Activated T-helper 1 cell treated with anti-CD3 and anti-CD28 coated beads, Interleukin-12 subunit alpha, Interleukin-12 subunit beta, Interleukin-2, Interleukin-4 antibody, amounts not matched to agents 30 ng/mL and 10 ng/mL and 1 ng/mL, durations not matched to agents 14 hours and 24 hours and 36 hours (primary cell): ENCODE measurements at regions of chr18 and their contacts with region 1.

Region 1: GRCh38 chr18:77000527-77000926 is 132.1 kb downstream of the MBP start:
- DNase-seq: peak; percentile 14
- H3K4me3 Mint-ChIP-seq: no peak overlapping the region
- H3K27ac Mint-ChIP-seq: no peak overlapping the region
- H3K4me1 Mint-ChIP-seq: peaks cover 26% of the 10 kb centered on the region
- H3K27me3 Mint-ChIP-seq: peaks cover 3% of the 10 kb centered on the region

Region 2: DNA sequence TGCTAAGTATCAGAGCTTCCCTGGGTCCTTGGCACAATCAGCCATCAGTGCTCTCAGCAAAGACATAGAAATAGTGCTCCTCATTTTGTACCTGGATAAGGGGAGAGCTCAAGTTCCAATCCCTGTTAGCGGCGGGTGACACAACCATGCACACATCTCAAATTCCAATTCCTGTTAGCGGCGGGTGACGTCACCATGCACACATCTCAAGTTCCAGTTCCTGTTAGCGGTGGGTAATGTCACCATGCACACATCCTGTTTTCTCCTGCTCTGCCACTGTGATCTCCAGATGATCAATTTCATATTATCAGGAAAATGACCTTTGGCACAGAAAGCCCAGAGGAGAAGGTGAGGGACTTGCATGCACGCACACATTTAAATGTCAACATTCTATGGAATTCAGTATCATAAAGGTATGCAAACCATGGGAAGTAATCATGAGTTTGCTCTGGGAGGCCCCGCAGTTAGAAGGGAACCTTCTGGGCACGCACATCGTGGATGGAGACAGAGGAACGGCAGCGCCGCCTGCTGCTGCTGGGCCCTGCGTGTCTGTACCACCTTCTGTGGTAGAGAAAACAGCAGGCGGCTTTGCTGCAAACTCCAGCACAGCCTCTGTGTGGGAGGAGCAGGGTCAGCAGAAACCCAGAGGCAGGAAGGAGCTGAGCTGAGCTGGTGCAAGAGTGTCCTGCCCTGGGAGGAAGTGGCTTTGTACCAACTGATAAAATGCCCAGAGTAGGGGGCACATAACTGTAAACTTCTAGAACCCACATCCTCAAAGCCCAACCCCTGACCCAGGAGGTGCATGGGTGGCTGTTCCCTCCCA is 54.3 kb after region 1 on chr18:
- intact Hi-C with region 1: loop called (anchors 1 kb)
- DNase-seq: peak; percentile 78
- H3K4me3 Mint-ChIP-seq: peak overlapping the region; percentile 72
- H3K27ac Mint-ChIP-seq: peak overlapping the region; percentile 95
- H3K4me1 Mint-ChIP-seq: peaks cover 66% of the 10 kb centered on the region
- H3K27me3 Mint-ChIP-seq: no peaks in the 10 kb centered on the region

Region 3: DNA sequence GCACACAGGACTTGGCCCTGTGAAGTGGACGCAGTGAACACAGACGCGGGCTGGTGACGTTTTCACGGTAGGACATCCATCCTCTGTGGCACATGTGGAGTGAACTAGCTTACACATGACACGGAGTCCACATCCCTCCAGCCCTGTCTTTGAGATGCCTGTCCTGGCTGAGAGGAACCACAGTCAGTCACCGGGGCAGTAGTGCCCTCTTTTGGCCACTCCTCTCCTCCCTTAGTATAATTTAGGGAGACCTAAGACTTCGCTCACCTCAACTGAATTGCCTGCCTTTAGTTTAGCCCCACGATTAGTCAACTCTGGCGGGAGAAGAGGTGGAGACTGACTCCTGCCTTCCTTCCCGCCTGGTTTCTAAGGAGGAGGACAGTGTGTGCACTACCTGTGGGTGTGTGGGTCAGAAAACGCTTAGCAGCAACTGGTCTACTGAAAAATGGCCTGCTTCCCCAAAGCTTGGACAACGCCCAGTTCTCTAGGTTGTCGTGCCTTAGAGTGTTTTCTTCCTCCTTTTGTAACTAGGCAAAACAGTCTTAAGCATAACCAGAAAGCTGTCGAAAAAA is 61.5 kb after region 1 on chr18:
- intact Hi-C with region 1: loop called (anchors 1 kb)
- DNase-seq: peak; percentile 37
- H3K4me3 Mint-ChIP-seq: peak overlapping the region; percentile 76
- H3K27ac Mint-ChIP-seq: peak overlapping the region; percentile 97
- H3K4me1 Mint-ChIP-seq: peaks cover 85% of the 10 kb centered on the region
- H3K27me3 Mint-ChIP-seq: no peaks in the 10 kb centered on the region

Region 4: DNA sequence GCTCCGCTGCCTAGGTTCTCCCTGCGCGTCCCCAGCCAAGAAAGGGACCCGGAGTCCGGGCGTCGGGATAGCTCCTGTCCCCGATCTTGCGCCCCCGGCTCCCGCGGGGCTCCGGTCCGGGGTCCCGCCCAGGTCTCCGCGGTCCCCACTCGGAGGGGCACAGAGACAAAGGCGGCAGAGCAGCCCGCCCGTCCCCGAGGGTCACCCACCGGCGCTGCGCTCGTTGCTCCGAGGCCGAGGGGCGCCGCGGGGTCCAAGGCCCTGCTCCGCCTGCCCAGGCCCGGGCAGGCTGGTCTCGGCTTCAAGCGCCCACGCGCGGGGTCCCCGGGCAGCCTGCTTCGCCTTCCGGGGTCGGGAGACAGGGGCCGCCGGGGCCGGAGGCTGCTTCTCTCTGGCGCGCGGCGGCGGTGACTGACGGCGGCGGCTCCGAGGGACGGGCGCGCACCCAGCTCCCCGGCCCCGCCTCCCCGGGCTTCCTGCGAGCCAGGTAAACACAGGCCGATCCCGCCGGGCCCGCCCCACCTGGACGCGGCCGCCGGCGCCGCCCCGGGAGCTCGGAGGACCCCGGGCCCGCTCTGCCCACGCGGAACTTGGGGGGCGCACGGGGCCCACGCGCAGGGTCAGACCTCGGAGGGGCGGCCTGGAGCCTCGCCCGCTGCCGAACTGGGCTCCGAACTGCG is 132.0 kb after region 1 on chr18 and contains the start of gene MBP:
- intact Hi-C with region 1: loop called (anchors 2 kb)
- DNase-seq: peak; percentile 65
- H3K4me3 Mint-ChIP-seq: peak within 1 kb of the TSS; percentile 100
- H3K27ac Mint-ChIP-seq: peak within 1 kb of the TSS; percentile 48
- H3K4me1 Mint-ChIP-seq: peaks cover 54% of the 10 kb centered on the region
- H3K27me3 Mint-ChIP-seq: no peaks in the 10 kb centered on the region
- total RNA-seq, gene MBP: 57.3 and 63.6 TPM in 2 replicates

Region 5: GRCh38 chr18:77207540-77207939 is 207.0 kb after region 1 on chr18:
- intact Hi-C with region 1: loop called (anchors 1 kb)
- DNase-seq: no peak
- H3K4me3 Mint-ChIP-seq: peak overlapping the region; percentile 28
- H3K27ac Mint-ChIP-seq: no peak overlapping the region
- H3K4me1 Mint-ChIP-seq: peaks cover 45% of the 10 kb centered on the region
- H3K27me3 Mint-ChIP-seq: no peaks in the 10 kb centered on the region

Region 6: GRCh38 chr18:77650799-77651385 is 650.4 kb after region 1 on chr18:
- intact Hi-C with region 1: loop called (anchors 1 kb)
- DNase-seq: peak; percentile 41
- H3K4me3 Mint-ChIP-seq: no peak overlapping the region
- H3K27ac Mint-ChIP-seq: no peak overlapping the region
- H3K4me1 Mint-ChIP-seq: peaks cover 4% of the 10 kb centered on the region
- H3K27me3 Mint-ChIP-seq: peaks cover 9% of the 10 kb centered on the region